WTC11 (cell line): ENCODE measurements at regions of chr5 and their contacts with region 1.

Region 1: DNA sequence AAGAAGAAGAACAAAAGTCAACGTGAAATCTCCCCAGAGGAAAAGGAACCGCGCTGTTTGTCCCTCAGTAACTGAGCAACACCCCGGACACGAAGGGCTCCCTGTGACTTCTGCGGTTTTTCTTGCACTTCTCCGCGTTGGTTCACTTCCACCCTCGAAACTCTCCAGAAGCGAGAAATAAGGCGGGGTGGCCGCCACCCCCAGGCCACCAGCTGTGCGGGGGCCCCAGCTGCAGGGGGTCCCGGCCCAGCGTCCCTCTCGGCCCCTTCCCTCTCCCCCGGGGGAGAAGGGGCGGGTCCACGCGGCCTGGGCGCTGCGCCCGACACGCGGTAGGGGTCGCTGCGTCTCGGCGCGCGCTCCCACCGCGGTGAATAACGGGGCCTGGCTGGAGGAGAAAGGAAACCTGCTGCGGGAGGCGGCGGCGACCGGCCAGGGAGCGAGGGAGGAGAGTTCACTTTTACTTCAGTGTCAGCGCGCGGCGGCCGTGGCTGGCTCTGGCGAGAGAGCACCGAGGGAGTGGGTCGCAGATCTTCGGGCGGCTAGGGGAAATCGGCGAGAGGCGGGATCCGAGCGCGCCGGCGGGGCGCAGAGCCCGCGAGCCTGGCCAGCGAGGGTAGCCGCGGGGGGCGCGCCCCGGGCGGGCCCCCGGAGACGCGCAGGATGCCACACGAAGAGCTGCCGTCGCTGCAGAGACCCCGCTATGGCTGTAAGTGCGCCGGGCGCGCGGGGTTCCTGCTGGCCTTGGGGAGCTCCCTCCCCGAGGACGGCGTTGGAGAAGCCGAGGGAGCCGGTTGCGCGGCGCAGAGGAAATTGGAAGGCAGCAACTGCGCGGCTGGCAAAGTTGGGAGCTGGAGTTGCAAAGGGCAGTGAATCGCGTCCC is at the start of gene IQGAP2:
- DNase-seq: peak; percentile 79
- ATAC-seq: peak; percentile 40
- H3K4me3 Mint-ChIP-seq: peak within 1 kb of the TSS; percentile 90
- H3K27ac Mint-ChIP-seq: peak within 1 kb of the TSS; percentile 92
- H3K4me1 Mint-ChIP-seq: peaks cover 50% of the 10 kb centered on the region
- H3K27me3 Mint-ChIP-seq: no peaks in the 10 kb centered on the region; the same call in 1 of the 2 replicates
- CTCF ChIP-seq: peak; percentile 68
- total RNA-seq, gene IQGAP2: 63.0 to 70.6 TPM (median 64.4 TPM) in 3 replicates

Region 2: DNA sequence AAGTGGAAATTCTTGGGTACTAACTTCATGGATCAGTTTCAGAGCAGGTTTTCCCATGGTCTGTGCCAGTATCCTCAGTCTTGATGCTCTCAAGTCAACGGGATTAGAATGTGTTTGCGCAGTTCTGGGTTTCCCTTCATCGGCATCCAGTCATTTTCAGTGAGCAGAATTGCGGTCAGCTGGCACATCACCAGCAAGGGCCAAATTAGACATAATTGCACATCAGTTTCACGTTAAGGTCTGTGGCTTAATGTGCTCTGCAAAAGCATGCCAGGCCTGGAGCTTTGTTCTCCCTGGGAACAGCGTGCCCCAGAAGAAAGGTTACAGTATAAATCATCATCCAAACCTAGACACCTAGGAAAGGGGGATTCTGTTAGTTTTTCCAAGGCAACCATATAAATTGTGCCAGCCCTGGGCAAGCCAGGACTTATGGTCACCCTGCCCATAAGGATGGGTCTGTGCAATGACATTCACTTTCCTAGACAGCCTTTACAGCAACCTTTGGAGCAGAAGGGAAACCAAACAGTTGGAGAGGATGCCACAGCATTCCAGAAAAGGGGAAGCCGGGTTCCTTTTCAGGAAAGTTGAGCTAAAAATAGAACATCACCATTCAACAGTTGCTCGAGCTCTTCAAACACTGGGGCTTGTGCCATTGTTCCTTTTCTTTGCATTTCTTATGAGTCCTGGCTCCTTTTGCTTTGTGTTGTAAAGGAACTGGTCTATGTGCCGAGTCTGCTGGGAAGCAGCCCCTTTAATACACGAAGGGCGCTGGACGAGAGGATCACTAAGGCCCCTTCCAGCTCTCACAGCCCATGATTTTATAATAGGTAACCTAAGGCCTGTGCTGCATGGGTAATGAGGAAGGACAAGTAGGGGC is 23.0 kb after region 1 on chr5:
- CTCF ChIA-PET with region 1: interaction called, 20 read pairs
- POLR2A ChIA-PET with region 1: interaction called, 3 read pairs
- DNase-seq: peak; percentile 17
- ATAC-seq: peak; percentile 77
- H3K4me3 Mint-ChIP-seq: peak overlapping the region; percentile 61
- H3K27ac Mint-ChIP-seq: peak overlapping the region; percentile 92
- H3K4me1 Mint-ChIP-seq: peaks cover 80% of the 10 kb centered on the region
- H3K27me3 Mint-ChIP-seq: no peaks in the 10 kb centered on the region
- CTCF ChIP-seq: no peak

Region 3: GRCh38 chr5:76467216-76467615 is 64.1 kb after region 1 on chr5:
- CTCF ChIA-PET with region 1: no interaction called
- POLR2A ChIA-PET with region 1: no interaction called
- DNase-seq: no peak
- ATAC-seq: no peak
- H3K4me3 Mint-ChIP-seq: no peak overlapping the region
- H3K27ac Mint-ChIP-seq: no peak overlapping the region
- H3K4me1 Mint-ChIP-seq: peaks cover 3% of the 10 kb centered on the region
- H3K27me3 Mint-ChIP-seq: no peaks in the 10 kb centered on the region
- CTCF ChIP-seq: no peak

Region 4: DNA sequence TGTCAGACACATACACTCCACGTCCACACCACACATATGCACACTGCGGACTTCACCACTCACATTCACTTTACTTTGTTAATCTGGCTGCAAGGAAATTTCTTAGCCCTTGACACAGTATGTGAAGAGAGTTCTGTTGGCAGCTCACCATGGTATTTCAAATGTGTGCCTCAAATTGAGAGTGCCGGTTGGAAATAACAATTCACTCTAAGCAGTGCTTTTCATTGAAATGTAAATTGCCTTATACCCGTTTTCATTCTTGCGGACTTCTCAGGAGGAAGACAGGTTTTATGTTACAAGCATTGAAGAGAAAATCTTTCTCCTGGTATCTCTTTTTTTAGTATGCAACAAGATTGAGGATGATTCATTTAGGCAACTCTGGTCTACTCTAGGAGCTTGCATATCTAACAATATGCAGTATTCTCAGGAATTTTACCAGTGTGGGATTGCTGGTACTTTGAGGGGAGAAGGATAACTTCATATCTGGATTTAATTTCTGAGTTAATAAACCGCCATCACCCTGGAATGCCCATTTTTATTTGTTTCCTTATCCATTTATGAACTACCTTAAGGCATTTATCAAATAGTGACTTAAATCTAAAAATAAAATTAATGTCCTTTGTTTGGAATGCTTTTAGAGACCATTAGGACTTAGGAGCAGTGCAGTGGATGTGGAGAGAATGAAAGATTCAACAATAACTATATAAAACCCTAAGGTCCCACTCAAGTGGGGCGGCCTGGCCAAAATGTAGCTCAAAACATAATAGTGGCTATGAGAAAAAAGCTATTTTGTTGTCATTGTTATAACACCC is 87.0 kb after region 1 on chr5:
- CTCF ChIA-PET with region 1: interaction called, 10 read pairs
- POLR2A ChIA-PET with region 1: no interaction called
- DNase-seq: no peak
- ATAC-seq: peak; percentile 57
- H3K4me3 Mint-ChIP-seq: peak overlapping the region; percentile 57
- H3K27ac Mint-ChIP-seq: peak overlapping the region; percentile 100
- H3K4me1 Mint-ChIP-seq: peaks cover 82% of the 10 kb centered on the region
- H3K27me3 Mint-ChIP-seq: no peaks in the 10 kb centered on the region
- CTCF ChIP-seq: no peak

Region 5: DNA sequence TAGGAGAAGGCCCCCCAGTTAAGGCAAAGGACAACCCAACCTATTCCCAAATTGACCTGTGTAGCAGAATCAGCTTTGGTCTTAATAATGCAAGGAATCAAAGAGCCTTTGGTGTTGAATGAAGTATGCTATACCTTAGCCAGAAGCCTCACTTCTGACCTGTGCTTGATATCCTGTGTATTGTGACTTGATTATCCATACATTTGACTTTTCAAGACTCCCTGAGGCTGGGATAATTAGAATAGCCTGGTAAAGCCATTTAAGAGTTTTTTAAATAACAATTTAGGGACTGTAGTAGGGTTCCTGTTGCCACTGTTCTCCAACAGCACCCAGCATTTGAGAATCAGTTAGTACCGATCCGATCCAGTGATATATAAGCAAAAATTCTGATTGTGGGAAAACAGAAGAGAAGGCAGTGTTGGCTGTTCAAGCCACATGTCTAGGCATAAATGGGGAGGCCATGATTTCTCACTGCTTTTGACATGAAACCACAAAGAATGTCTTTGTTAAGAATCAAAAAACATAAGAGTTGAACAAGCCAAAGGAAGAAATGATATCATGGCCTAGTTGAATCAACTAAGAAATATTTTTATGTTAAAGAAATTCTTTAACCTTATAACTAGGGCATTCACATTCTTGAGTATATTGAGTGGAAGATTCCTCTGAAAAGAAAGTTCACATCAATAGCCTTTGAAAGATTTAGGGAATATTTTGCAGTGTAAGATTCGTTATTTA is 121.1 kb after region 1 on chr5:
- CTCF ChIA-PET with region 1: interaction called, 10 read pairs
- POLR2A ChIA-PET with region 1: no interaction called
- DNase-seq: no peak
- ATAC-seq: peak; percentile 93
- H3K4me3 Mint-ChIP-seq: peak overlapping the region; percentile 51
- H3K27ac Mint-ChIP-seq: peak overlapping the region; percentile 95
- H3K4me1 Mint-ChIP-seq: peaks cover 84% of the 10 kb centered on the region
- H3K27me3 Mint-ChIP-seq: no peaks in the 10 kb centered on the region; the same call in 1 of the 2 replicates
- CTCF ChIP-seq: no peak

Region 6: GRCh38 chr5:76582230-76583162 is 179.4 kb after region 1 on chr5:
- CTCF ChIA-PET with region 1: interaction called, 43 read pairs
- POLR2A ChIA-PET with region 1: no interaction called
- DNase-seq: no peak
- ATAC-seq: peak; percentile 71
- H3K4me3 Mint-ChIP-seq: no peak overlapping the region; the same call in 1 of the 2 replicates
- H3K27ac Mint-ChIP-seq: peak overlapping the region; percentile 93; the same call in 1 of the 2 replicates
- H3K4me1 Mint-ChIP-seq: peaks cover 51% of the 10 kb centered on the region
- H3K27me3 Mint-ChIP-seq: no peaks in the 10 kb centered on the region
- CTCF ChIP-seq: no peak